Activated T-helper 2 cell treated with anti-CD3 and anti-CD28 coated beads, Interferon-gamma antibody, Interleukin-2, Interleukin-4, amounts not matched to agents 10 μg/mL and 5 μg/mL and 100 μg/mL, durations not matched to agents 14 hours and 24 hours and 36 hours (primary cell): ENCODE measurements at regions of chr9 and their contacts with region 1.

Region 1: DNA sequence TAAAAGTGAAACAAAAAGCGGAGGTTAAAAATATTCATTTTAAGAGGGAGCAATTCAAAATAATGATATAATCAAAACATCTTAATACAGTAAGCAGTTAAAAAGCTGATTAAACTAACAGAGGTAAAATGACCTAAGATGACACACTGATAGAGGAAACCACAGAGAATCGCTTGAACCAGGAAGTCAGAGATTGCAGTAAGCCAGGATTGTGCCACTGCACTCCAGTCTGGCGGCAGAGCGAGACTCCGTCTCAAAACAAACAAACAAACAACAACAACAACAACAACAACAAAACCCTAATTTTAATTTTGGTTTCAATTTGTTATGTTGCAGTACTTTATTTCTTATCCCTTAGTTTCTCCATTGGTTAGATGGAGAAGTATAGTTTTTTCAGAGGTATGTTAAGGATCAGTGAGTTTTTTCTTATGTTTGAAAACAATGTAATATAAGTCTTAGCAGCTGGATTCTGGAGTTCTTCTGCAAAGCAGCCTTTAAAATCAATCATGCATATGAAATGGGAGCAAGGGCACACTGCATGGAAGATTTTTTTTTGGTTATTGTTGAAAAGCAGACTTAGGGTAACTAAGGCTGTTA is 58.5 kb downstream of the MLANA start:
- DNase-seq: peak; percentile 14
- H3K4me3 Mint-ChIP-seq: peak overlapping the region; percentile 21
- H3K27ac Mint-ChIP-seq: no peak overlapping the region
- H3K4me1 Mint-ChIP-seq: peaks cover 31% of the 10 kb centered on the region
- H3K27me3 Mint-ChIP-seq: no peaks in the 10 kb centered on the region

Region 2: DNA sequence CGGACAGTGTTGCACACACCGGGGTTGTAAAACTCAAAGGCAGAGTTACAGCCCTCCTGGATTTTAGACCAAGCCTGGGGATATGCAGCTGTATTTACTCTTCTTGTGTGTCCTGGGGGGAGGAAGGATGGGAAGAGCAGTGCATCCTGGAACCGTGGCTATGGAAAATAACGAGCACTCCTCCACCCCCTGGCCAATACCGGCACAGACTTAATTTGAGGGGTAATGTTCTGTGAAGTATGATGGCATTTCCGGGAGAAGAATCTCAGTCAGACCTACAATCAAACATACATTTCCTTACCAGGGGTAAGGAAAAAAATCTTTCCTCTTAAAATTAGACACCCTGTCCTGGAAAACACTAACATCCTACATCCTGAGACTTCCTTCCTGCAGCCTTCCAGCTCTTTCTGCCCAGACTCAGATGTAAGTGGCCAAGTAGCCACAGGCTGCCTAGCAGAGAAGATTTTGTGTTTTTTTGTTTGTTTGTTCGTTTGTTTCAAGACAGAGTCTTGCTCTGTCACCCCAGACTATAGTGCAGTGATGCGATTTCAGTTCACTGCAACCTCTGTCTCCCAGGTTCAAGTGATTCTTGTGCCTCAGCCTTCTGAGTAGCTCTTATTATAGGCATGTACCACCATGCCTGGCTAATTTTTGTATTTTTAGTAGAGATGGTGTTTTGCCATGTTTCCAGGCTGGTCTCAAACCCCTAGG is 105.3 kb before region 1 on chr9:
- intact Hi-C with region 1: loop called (anchors 2 kb)
- DNase-seq: no peak
- H3K4me3 Mint-ChIP-seq: peak overlapping the region; percentile 64
- H3K27ac Mint-ChIP-seq: peak overlapping the region; percentile 95
- H3K4me1 Mint-ChIP-seq: peaks cover 79% of the 10 kb centered on the region
- H3K27me3 Mint-ChIP-seq: no peaks in the 10 kb centered on the region

Region 3: DNA sequence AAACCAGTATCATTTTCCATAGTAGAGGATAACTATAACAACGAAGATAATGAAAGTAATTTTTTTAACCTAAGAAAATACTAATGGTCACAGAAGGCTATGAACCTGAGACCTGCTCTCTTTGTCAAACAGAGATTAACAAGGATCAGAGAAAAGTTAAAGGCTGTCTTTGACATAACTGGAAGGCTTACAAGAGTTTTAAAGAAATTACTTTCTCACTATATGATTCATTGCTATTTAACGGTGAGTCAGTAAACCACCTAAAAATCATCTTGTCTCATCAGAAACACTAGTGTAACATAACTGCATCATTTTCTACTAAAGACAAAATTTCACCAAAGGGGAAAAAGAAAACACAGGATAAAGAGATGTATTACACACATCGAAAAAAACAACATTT is 39.2 kb before region 1 on chr9:
- intact Hi-C with region 1: loop called (anchors 5 kb)
- DNase-seq: no peak
- H3K4me3 Mint-ChIP-seq: no peak overlapping the region
- H3K27ac Mint-ChIP-seq: peak overlapping the region; percentile 59
- H3K4me1 Mint-ChIP-seq: peaks cover 18% of the 10 kb centered on the region
- H3K27me3 Mint-ChIP-seq: no peaks in the 10 kb centered on the region

Region 4: DNA sequence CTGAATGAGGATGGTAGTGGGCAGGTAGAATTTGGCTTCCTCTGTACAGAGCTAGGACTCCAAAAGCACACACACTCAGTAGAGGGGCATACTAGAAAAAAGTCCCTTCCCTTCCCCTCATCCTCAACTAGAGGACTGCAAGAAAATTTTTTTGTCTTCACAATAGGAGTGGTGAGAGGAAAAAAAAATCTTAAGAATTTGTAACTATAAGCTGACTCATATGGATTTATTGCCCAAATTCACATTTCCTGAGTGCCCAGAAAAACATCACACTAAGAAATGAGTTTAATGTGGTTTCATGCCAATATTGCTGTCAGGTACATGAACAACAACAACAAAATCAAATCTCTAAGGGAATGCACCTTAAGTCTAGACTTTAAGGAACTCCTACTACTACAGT is 22.5 kb after region 1 on chr9:
- intact Hi-C with region 1: no loop called
- DNase-seq: no peak
- H3K4me3 Mint-ChIP-seq: no peak overlapping the region
- H3K27ac Mint-ChIP-seq: no peak overlapping the region
- H3K4me1 Mint-ChIP-seq: peaks cover 11% of the 10 kb centered on the region
- H3K27me3 Mint-ChIP-seq: no peaks in the 10 kb centered on the region